Calu3 (cell line): ENCODE measurements at regions of chr3 and their contacts with region 1.

Region 1: GRCh38 chr3:171829841-171830517 is 13.2 kb upstream of the TMEM212 start:
- DNase-seq: peak; percentile 86
- H3K4me3 Mint-ChIP-seq: no peak overlapping the region
- H3K27ac Mint-ChIP-seq: no peak overlapping the region
- H3K4me1 Mint-ChIP-seq: peaks cover 44% of the 10 kb centered on the region
- H3K27me3 Mint-ChIP-seq: no peaks in the 10 kb centered on the region
- CTCF ChIP-seq: peak; percentile 93

Region 2: GRCh38 chr3:171604370-171604769 is 225.6 kb before region 1 on chr3:
- CTCF ChIA-PET with region 1: no interaction called
- intact Hi-C with region 1: no loop called
- DNase-seq: no peak
- H3K4me3 Mint-ChIP-seq: no peak overlapping the region
- H3K27ac Mint-ChIP-seq: no peak overlapping the region
- H3K4me1 Mint-ChIP-seq: no peaks in the 10 kb centered on the region
- H3K27me3 Mint-ChIP-seq: no peaks in the 10 kb centered on the region
- CTCF ChIP-seq: no peak

Region 3: DNA sequence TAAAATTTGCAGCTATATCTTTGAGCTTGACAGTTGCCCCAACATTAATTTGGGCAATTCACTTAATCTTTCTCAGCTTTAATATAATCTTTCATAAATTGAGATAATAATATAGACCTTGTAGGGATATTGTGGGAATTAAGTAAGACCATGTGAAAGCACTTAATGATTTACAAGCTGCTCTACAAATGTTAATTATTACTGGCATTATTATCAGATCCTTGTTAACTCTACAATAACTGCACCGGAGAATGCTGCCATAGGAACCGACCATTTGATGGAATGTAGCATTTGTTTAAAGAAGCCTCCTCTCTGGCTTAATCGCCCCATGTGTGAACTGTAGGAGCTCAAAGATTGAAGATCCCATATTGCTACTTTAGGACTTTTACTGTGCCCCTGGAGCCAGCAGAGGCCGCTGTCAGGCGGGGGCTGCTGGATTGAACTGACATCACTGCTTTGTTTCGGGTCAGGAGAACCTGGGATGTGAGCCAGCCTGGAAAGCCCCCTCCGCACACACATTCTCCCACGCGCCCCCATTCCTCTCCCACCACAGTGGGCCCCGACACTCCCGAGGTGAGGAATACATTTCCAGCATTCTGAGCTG is 215.6 kb before region 1 on chr3:
- CTCF ChIA-PET with region 1: interaction called, 14 read pairs
- intact Hi-C with region 1: no loop called
- DNase-seq: peak; percentile 68
- H3K4me3 Mint-ChIP-seq: no peak overlapping the region
- H3K27ac Mint-ChIP-seq: no peak overlapping the region
- H3K4me1 Mint-ChIP-seq: peaks cover 30% of the 10 kb centered on the region
- H3K27me3 Mint-ChIP-seq: no peaks in the 10 kb centered on the region
- CTCF ChIP-seq: peak; percentile 93

Region 4: GRCh38 chr3:171646357-171647133 is 183.4 kb before region 1 on chr3:
- CTCF ChIA-PET with region 1: interaction called, 4 read pairs
- intact Hi-C with region 1: loop called (anchors 1 kb)
- DNase-seq: no peak
- H3K4me3 Mint-ChIP-seq: no peak overlapping the region
- H3K27ac Mint-ChIP-seq: no peak overlapping the region
- H3K4me1 Mint-ChIP-seq: peaks cover 9% of the 10 kb centered on the region
- H3K27me3 Mint-ChIP-seq: no peaks in the 10 kb centered on the region
- CTCF ChIP-seq: peak; percentile 63

Region 5: DNA sequence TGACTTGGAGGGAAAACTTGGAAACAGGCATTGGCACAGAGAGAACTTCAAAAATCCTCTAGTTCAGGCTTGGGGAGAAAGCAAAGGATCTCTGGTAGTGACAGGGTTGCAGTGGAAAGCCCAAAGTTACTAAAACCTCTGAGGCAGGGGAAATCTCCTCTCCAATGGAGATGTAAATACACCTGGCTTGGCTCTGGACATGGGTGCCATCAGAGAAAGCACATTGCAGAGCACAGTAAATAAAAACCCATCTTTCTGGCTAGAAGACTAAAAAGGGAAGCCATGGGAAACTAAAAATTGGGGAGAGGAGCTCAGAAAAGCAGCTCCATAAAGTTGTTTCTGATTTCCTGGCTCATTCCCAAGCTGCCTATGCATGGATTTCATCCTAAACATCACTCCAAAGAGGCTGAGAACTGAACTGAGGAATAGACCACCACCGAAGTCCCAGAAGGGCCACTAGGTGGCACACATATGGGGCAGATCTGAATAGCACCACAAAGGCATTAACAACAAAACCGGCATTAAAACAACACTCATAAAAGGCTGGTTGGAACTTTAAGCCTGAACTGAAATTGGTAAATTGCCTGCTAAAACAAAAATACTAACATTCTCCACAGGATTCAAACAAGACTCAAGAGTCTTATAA is 126.1 kb before region 1 on chr3:
- CTCF ChIA-PET with region 1: interaction called, 3 read pairs
- intact Hi-C with region 1: loop called (anchors 1 kb)
- DNase-seq: peak; percentile 72
- H3K4me3 Mint-ChIP-seq: no peak overlapping the region
- H3K27ac Mint-ChIP-seq: no peak overlapping the region
- H3K4me1 Mint-ChIP-seq: no peaks in the 10 kb centered on the region
- H3K27me3 Mint-ChIP-seq: no peaks in the 10 kb centered on the region
- CTCF ChIP-seq: peak; percentile 80

Region 6: DNA sequence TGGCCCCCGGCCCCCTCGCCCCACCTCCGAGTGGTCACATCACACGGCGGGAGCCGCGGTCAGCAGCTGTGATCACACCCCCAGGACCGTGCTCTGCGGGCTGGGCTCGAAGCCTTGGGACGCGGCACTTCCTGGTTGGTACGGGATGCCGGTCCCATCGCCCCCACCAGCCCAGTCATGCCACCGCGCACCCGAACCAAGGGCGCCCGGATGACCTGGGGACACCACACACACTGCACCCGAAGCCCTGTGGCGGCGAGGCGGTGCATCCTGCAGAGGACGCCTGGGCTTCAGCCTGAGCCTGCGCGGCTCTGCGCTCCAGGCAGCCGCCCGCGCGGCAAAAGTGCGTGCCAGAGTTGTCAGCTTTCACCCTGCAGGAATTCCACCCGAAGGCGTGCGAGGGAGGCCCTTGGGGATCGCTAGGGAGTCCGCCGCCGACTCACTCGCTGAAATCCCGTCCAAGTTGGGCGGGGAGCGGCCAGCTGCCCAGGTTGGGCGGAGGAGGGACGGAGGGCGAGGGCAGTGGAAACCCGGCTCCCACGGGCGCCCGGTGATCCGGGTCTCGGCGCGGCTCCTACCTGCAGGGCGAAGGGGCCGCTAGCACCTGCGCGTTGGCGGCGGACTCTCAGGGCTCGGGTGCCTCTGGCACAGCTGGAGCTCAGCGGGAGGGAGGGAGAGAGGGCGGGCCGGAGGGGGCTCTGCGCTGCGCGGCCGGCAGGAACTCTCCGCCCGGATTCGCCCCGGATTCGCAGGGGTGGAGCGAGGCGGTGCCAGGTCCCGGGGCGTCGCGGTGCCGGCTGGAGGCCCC is 20.0 kb before region 1 on chr3 and contains the start of gene PLD1:
- CTCF ChIA-PET with region 1: interaction called, 16 read pairs
- intact Hi-C with region 1: no loop called
- DNase-seq: peak; percentile 97
- H3K4me3 Mint-ChIP-seq: peak within 1 kb of the TSS; percentile 96
- H3K27ac Mint-ChIP-seq: peak within 1 kb of the TSS; percentile 94
- H3K4me1 Mint-ChIP-seq: peaks cover 62% of the 10 kb centered on the region
- H3K27me3 Mint-ChIP-seq: no peaks in the 10 kb centered on the region
- CTCF ChIP-seq: no peak
- total RNA-seq, gene PLD1: 58.5 and 61.2 TPM in 2 replicates

Region 7: DNA sequence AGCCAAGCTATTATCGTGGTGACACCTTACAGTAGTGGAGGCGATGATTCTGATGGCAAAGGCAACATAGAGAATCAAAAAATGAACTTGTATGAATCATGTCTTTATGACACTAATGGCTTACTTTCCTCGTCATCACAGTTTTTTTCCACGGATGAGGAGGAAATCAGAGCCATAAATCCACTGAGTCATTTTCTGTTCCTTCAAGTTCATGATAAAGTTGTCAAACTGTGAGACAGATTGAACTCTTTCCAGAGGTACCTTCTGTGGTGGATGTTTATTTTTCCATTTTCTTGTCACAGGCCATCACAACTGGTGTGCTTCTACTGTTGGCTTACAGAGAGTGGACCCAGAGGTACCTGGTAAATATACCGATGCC is 21.7 kb after region 1 on chr3:
- CTCF ChIA-PET with region 1: no interaction called
- intact Hi-C with region 1: no loop called
- DNase-seq: no peak
- H3K4me3 Mint-ChIP-seq: no peak overlapping the region
- H3K27ac Mint-ChIP-seq: no peak overlapping the region
- H3K4me1 Mint-ChIP-seq: peaks cover 34% of the 10 kb centered on the region
- H3K27me3 Mint-ChIP-seq: no peaks in the 10 kb centered on the region
- CTCF ChIP-seq: no peak

Region 8: DNA sequence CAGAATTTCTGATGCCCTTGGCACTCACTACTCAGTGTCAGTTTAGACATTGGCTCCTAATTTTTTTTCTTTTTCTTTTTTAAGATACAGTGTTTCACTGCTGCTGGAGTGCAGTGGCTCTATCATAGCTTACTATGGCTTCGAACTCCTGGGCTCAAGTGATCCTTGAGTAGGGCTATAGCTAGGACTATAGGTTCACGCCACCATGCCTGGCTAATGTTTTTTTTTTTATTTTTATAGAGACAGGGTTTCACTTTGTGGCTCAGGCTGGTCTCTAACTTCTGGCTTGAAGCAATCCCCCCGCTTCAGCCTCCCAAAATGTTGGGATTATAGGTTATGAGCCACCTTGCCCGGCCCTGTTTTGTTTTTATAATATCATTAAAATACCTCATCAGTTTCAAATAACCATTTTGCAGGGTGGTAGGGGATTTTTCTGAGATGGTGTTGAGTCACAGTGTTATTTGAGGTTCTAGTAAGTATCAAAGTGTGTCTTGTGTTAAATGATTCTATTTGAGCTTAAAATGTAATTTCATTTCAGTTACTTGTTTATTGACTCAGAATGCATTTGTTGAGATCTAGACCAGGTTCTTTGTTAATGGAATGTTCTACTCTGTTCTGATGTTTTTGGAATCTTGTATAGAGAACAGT is 216.4 kb after region 1 on chr3:
- CTCF ChIA-PET with region 1: interaction called, 3 read pairs
- intact Hi-C with region 1: loop called (anchors 5 kb)
- DNase-seq: no peak
- H3K4me3 Mint-ChIP-seq: peak overlapping the region; percentile 91
- H3K27ac Mint-ChIP-seq: peak overlapping the region; percentile 45
- H3K4me1 Mint-ChIP-seq: peaks cover 60% of the 10 kb centered on the region
- H3K27me3 Mint-ChIP-seq: no peaks in the 10 kb centered on the region
- CTCF ChIP-seq: no peak

Region 9: DNA sequence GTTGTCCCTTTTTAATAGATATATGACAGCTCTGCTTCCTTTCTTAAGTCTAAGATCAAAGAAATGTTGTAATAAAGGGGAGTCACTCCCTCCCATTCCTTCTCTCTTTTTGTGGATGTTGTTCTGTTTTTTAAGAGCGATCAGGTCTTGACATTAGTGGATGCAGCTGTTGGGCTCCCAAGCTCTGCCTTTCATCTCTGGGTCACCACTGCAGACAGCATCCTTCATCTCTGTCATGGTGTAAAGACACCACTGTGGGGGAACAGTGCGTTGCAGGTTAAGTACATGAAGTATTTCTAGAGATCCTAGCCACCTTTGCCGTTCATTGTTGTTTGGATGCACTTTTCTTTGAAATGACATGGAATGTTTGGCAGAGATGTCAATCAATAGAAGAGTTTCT is 227.1 kb after region 1 on chr3:
- CTCF ChIA-PET with region 1: no interaction called
- intact Hi-C with region 1: no loop called
- DNase-seq: no peak
- H3K4me3 Mint-ChIP-seq: peak overlapping the region; percentile 0
- H3K27ac Mint-ChIP-seq: peak overlapping the region; percentile 6
- H3K4me1 Mint-ChIP-seq: peaks cover 82% of the 10 kb centered on the region
- H3K27me3 Mint-ChIP-seq: no peaks in the 10 kb centered on the region
- CTCF ChIP-seq: no peak

Region 10: DNA sequence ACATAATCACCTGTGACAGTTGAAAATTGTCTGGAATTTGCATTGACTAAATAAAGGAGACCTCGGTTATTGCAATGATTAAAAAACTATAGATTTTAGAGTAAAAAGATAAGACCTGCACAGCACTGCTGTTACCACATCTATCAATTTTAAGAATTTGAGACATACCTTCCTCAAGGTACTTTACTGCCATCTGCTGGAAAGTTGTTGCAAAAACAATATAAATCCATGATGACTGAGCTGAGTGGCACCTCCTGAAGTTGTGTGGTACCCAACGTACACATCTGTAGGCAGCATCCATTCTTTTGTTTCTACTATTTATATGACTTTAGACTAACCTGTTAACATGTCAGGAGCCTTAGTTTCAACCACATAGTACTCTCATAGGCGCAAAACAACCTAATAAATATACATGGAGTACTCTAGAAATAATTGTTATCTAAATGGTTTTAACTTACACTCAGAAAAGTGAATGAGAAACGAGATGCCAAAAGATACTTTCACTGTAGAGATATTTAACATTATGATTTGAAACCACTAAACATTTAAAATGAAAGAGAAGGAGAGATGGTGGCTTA is 511.6 kb after region 1 on chr3:
- CTCF ChIA-PET with region 1: interaction called, 7 read pairs
- intact Hi-C with region 1: loop called (anchors 10 kb)
- DNase-seq: peak; percentile 51
- H3K4me3 Mint-ChIP-seq: no peak overlapping the region
- H3K27ac Mint-ChIP-seq: peak overlapping the region; percentile 21
- H3K4me1 Mint-ChIP-seq: peaks cover 7% of the 10 kb centered on the region
- H3K27me3 Mint-ChIP-seq: no peaks in the 10 kb centered on the region
- CTCF ChIP-seq: peak; percentile 76